A673 (cell line): ENCODE measurements at regions of chr15 and their contacts with region 1.

Region 1: DNA sequence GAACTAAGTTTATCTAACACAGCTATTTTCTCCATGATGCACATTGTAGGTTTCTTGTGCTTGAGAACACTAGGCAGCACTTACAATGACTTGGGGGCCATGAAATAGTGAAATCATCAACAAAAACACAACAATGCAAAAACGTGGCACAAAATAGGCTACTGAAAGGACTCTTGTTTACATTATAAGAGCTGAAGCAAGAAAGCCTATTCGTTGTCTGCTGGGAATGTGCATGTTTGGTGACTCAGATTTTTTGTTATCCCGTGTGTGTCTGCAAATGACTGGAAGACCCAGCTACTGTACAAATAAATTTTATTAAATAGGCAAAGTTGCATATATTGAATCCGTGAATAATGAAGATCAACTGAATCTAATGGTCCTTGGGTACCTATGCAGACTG is 85.0 kb downstream of the TCF12 start:
- DNase-seq: no peak
- H3K4me3 ChIP-seq: no peak overlapping the region
- H3K27ac ChIP-seq: no peak overlapping the region
- H3K4me1 ChIP-seq: peaks cover 22% of the 10 kb centered on the region
- H3K27me3 ChIP-seq: no peaks in the 10 kb centered on the region
- CTCF ChIP-seq: no peak

Region 2: GRCh38 chr15:57273402-57273801 is 270.0 kb after region 1 on chr15:
- CTCF ChIA-PET with region 1: no interaction called
- POLR2A ChIA-PET with region 1: interaction called, 19 read pairs
- intact Hi-C with region 1: no loop called
- DNase-seq: no peak
- H3K4me3 ChIP-seq: no peak overlapping the region
- H3K27ac ChIP-seq: no peak overlapping the region
- H3K4me1 ChIP-seq: no peaks in the 10 kb centered on the region
- H3K27me3 ChIP-seq: no peaks in the 10 kb centered on the region
- CTCF ChIP-seq: no peak

Region 3: GRCh38 chr15:57522148-57522547 is 518.7 kb after region 1 on chr15:
- CTCF ChIA-PET with region 1: no interaction called
- POLR2A ChIA-PET with region 1: no interaction called
- intact Hi-C with region 1: no loop called
- DNase-seq: no peak
- H3K4me3 ChIP-seq: no peak overlapping the region
- H3K27ac ChIP-seq: no peak overlapping the region
- H3K4me1 ChIP-seq: peaks cover 6% of the 10 kb centered on the region
- H3K27me3 ChIP-seq: no peaks in the 10 kb centered on the region
- CTCF ChIP-seq: no peak